Activated CD4-positive, alpha-beta memory T cell treated with anti-CD3 and anti-CD28 coated beads, Interleukin-2, amount 10 ng/mL, durations not matched to agents 7 days and 5 days (primary cell): ENCODE measurements at regions of chr3 and their contacts with region 1.

Region 1: GRCh38 chr3:130892759-130893375 is 1.0 kb upstream of the ATP2C1 start:
- DNase-seq: peak; percentile 71
- H3K4me3 Mint-ChIP-seq: peak overlapping the region; percentile 93
- H3K27ac Mint-ChIP-seq: peak overlapping the region; percentile 97
- H3K4me1 Mint-ChIP-seq: peaks cover 36% of the 10 kb centered on the region
- H3K27me3 Mint-ChIP-seq: no peaks in the 10 kb centered on the region

Region 2: GRCh38 chr3:130746246-130747039 is 146.4 kb before region 1 on chr3 and contains the start of gene PIK3R4:
- CTCF ChIA-PET with region 1: interaction called, 8 read pairs
- POLR2A ChIA-PET with region 1: interaction called, 48 read pairs
- DNase-seq: peak; percentile 95
- H3K4me3 Mint-ChIP-seq: peak within 1 kb of the TSS; percentile 84
- H3K27ac Mint-ChIP-seq: peak within 1 kb of the TSS; percentile 92
- H3K4me1 Mint-ChIP-seq: peaks cover 52% of the 10 kb centered on the region
- H3K27me3 Mint-ChIP-seq: no peaks in the 10 kb centered on the region
- total RNA-seq, gene PIK3R4: 21.6 to 25.0 TPM

Region 3: DNA sequence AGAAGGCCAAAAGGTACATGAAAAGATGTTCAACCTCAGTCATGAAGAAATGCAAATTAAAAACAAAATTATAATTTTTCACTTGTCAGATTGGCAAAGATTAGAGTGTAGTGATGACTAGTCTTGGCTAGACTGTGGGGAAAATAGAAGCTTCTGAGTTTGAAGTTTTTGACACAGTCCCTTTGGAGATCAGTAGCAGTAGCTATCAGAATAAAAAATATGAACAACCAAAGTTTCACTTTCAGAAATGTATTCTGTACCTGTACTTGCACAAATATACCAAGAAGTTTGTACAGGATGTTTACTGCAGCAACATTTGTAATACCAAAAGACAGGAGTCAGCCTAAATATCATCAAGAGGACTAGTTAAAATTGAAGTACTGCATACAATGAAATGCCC is 15.1 kb after region 1 on chr3:
- CTCF ChIA-PET with region 1: interaction called, 6 read pairs
- POLR2A ChIA-PET with region 1: interaction called, 19 read pairs
- DNase-seq: no peak
- H3K4me3 Mint-ChIP-seq: peak overlapping the region; percentile 19
- H3K27ac Mint-ChIP-seq: peak overlapping the region; percentile 85
- H3K4me1 Mint-ChIP-seq: peaks cover 47% of the 10 kb centered on the region
- H3K27me3 Mint-ChIP-seq: no peaks in the 10 kb centered on the region

Region 4: DNA sequence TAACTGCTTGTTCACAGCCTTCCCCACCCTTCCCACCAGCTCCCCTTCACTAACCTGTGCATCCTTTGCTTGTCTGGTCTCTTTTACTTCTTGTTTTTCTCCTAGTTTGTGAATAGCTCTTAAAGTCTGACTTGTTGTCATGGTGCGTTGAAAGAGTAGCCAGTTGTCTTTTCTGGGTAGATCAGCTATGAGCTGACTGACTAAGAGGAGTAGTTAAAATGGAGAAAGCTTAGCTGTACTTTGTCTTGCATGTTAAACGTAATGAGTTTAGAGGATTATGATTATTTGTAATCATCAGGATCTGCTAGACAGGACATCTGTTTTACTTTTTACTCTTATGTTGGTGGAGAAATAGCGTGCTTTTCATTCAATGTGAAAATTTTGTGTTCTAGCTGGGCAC is 36.9 kb after region 1 on chr3:
- CTCF ChIA-PET with region 1: interaction called, 4 read pairs
- POLR2A ChIA-PET with region 1: interaction called, 10 read pairs
- DNase-seq: no peak
- H3K4me3 Mint-ChIP-seq: no peak overlapping the region
- H3K27ac Mint-ChIP-seq: no peak overlapping the region
- H3K4me1 Mint-ChIP-seq: peaks cover 11% of the 10 kb centered on the region
- H3K27me3 Mint-ChIP-seq: no peaks in the 10 kb centered on the region